CD8-positive, alpha-beta T cell (primary cell): ENCODE measurements at regions of chr12 and their contacts with region 1.

Region 1: DNA sequence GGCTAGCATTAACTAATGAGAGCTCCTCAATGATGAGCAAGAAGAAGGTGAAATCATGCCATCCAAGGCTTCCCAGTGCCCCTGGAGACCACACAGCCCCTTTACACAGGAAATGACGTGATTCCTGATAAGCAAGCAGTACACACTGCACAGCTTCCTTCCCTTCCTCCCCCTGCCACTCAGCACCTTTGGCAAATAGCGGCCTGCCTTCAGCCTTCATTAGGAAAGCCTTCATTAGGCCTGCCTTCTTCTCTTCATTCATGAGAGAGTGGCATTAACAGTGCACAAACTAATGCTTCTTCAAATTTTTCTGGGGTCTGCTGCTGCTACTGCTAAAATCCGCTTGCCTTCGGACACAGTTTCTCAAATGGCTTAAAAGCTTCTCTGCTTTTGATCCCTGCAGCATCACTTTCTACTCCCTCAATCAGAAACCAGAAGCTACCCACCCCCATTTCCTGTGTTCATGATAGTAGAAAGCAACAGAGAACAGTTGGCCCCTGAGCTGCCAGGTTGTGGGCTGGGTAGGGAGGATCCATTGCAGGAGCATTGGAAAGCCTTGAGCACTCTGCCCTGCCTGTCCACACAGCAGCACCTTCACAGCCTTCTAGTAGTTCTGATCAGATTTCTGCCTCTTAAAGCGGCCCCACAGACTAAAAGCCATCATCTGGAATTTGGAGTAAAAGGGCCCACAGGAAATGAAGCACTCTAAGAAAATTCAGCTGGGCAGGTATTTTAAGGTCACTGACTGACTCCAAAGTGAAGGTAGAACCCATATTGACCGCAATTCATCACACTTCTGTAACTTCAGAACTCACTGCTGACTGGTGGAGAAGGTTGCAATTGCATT is 103.8 kb upstream of the ETV6 start:
- DNase-seq: peak; percentile 13 to 85 (median 50)
- ATAC-seq: peak; percentile 80
- H3K4me3 ChIP-seq: peak overlapping the region; percentile 2 to 9
- H3K4me3 Mint-ChIP-seq: peak overlapping the region; percentile 64
- H3K27ac ChIP-seq: peak overlapping the region; percentile 74 to 76
- H3K27ac Mint-ChIP-seq: peak overlapping the region; percentile 95
- H3K4me1 ChIP-seq: peaks cover 39% of the 10 kb centered on the region
- H3K4me1 Mint-ChIP-seq: peaks cover 57% of the 10 kb centered on the region
- H3K27me3 ChIP-seq: no peaks in the 10 kb centered on the region
- H3K27me3 Mint-ChIP-seq: no peaks in the 10 kb centered on the region
- CTCF ChIP-seq: peak; percentile 35

Region 2: GRCh38 chr12:11171145-11171968 is 374.4 kb before region 1 on chr12 and contains the start of gene SMIM10L1:
- CTCF ChIA-PET with region 1: no interaction called
- POLR2A ChIA-PET with region 1: interaction called, 4 read pairs
- intact Hi-C with region 1: loop called in 1 of 2 experiments (anchors 1 kb)
- DNase-seq: peak; percentile 78 to 95 (median 88)
- ATAC-seq: peak; percentile 91
- H3K4me3 ChIP-seq: peak within 1 kb of the TSS; percentile 56 to 73
- H3K4me3 Mint-ChIP-seq: peak within 1 kb of the TSS; percentile 99
- H3K27ac ChIP-seq: peak within 1 kb of the TSS; percentile 72 to 86
- H3K27ac Mint-ChIP-seq: peak within 1 kb of the TSS; percentile 100
- H3K4me1 ChIP-seq: peaks cover 38% of the 10 kb centered on the region
- H3K4me1 Mint-ChIP-seq: peaks cover 66% of the 10 kb centered on the region
- H3K27me3 ChIP-seq: no peaks in the 10 kb centered on the region
- H3K27me3 Mint-ChIP-seq: no peaks in the 10 kb centered on the region
- CTCF ChIP-seq: no peak
- total RNA-seq, gene SMIM10L1: 9.2 to 9.6 TPM

Region 3: GRCh38 chr12:11500178-11500860 is 45.4 kb before region 1 on chr12:
- CTCF ChIA-PET with region 1: interaction called, 3 read pairs
- POLR2A ChIA-PET with region 1: no interaction called
- intact Hi-C with region 1: loop called (anchors 2 to 5 kb)
- DNase-seq: peak; percentile 60 to 84 (median 78)
- ATAC-seq: peak; percentile 95
- H3K4me3 ChIP-seq: no peak overlapping the region
- H3K4me3 Mint-ChIP-seq: no peak overlapping the region
- H3K27ac ChIP-seq: no peak overlapping the region
- H3K27ac Mint-ChIP-seq: no peak overlapping the region
- H3K4me1 ChIP-seq: peaks cover 9% of the 10 kb centered on the region
- H3K4me1 Mint-ChIP-seq: peaks cover 8% of the 10 kb centered on the region
- H3K27me3 ChIP-seq: peaks cover 0 to 3% of the 10 kb centered on the region in 2 experiments
- H3K27me3 Mint-ChIP-seq: peaks cover 41% of the 10 kb centered on the region
- CTCF ChIP-seq: no peak

Region 4: DNA sequence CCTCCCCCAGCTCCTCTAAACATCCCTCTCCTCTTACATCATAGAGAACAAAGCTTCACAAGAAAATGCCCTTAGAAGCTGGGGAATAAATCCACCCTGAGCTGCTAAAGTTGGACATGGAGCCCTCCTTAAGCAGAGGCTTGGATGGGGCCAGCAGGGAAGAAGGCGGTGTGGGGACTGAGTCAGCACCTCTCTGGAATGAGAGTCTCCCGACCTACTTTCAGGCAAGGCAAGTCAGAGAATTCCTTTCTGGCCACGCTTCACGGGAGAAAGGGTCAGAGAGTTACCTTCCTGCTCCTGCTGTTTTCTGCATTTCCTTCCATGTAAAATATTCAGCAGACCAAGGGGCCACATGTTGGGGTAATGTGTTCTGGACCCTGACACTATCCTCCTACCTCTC is 37.0 kb before region 1 on chr12:
- CTCF ChIA-PET with region 1: interaction called, 15 read pairs
- POLR2A ChIA-PET with region 1: no interaction called
- intact Hi-C with region 1: loop called in 1 of 2 experiments (anchors 5 kb)
- DNase-seq: no peak
- ATAC-seq: no peak
- H3K4me3 ChIP-seq: no peak overlapping the region
- H3K4me3 Mint-ChIP-seq: no peak overlapping the region
- H3K27ac ChIP-seq: no peak overlapping the region
- H3K27ac Mint-ChIP-seq: no peak overlapping the region
- H3K4me1 ChIP-seq: no peaks in the 10 kb centered on the region
- H3K4me1 Mint-ChIP-seq: peaks cover 6% of the 10 kb centered on the region
- H3K27me3 ChIP-seq: no peaks in the 10 kb centered on the region
- H3K27me3 Mint-ChIP-seq: no peaks in the 10 kb centered on the region
- CTCF ChIP-seq: no peak